K562 (cell line): ENCODE measurements at regions of chr7 and their contacts with region 1.

Region 1: GRCh38 chr7:94395141-94396036 is 694 bp downstream of the COL1A2 start:
- DNase-seq: peak; percentile 83 to 86 (median 84)
- ATAC-seq: peak; percentile 96
- H3K4me3 ChIP-seq: no peak overlapping the region
- H3K27ac ChIP-seq: peak overlapping the region; percentile 31; the same call in 2 of the 3 replicates
- H3K4me1 ChIP-seq: peaks cover 5 to 7% of the 10 kb centered on the region in 2 experiments; a peak in 4 of 5 replicates
- H3K27me3 ChIP-seq: peaks cover 0 to 10% of the 10 kb centered on the region in 2 experiments; a peak in 1 of 5 replicates
- CTCF ChIP-seq: peak; percentile 71 to 90 (median 83)
- EP300 ChIP-seq: no peak
- POLR2A ChIP-seq: no peak
- RAD21 ChIP-seq: peak; percentile 75 to 90

Region 2: DNA sequence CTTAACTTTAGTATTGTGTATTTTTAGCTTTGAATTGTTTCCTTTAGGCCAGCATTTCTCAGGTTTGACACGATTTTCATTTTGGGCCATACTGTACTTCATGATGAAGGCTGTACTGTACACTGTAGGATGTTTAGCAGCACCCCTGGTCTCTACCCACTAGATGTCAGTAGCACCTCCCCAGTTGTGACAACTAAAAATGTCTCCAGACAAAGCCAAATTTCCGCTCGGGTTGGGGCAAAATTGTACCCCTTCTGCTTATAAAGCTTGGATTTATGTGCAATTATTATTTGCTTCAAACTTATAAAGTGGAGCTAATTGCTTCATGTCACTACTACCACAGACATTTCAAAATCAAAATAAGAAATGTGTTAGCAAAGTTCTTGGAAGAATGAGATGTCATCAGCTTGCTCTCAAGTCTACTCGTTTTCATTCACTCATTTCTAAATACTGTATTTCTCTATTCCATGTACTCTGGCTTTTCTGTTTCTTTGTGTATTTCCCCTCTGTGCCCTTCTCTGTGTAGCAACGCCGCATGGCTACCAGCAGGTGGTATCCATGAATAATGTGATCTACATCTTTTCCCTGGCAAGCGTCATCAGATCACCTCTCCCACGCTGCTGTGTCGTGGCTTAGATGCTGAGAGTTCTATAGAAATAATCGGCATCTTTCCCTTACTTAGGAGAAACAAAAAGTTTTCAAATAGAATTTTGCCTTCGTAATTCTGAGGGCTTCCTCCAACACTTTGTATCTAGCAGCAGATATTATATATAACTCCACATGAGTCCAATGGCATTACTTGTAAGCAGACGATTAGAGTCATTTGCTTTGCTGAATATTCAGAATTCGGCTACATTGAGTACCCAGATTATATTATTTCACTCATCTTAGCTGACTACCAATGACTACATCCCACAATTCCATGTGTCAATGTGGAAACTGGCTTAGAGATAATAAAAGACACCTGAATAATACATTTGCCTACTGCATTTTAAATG is 773.1 kb before region 1 on chr7:
- CTCF ChIA-PET with region 1: no interaction called
- POLR2A ChIA-PET with region 1: no interaction called
- in situ Hi-C with region 1: no loop called
- intact Hi-C with region 1: loop called (anchors 10 kb)
- DNase-seq: peak; percentile 35 to 59 (median 52)
- ATAC-seq: peak; percentile 98
- H3K4me3 ChIP-seq: no peak overlapping the region
- H3K27ac ChIP-seq: no peak overlapping the region
- H3K4me1 ChIP-seq: 0 out of 5 replicates have a peak, but pooled peaks cover 0 to 3% of the 10 kb centered on the region in 2 experiments
- H3K27me3 ChIP-seq: no peaks in the 10 kb centered on the region
- CTCF ChIP-seq: peak; percentile 60 to 63 (median 61)
- EP300 ChIP-seq: no peak
- POLR2A ChIP-seq: no peak
- RAD21 ChIP-seq: peak; percentile 44 to 53

Region 3: GRCh38 chr7:93715234-93715633 is 680.2 kb before region 1 on chr7:
- CTCF ChIA-PET with region 1: interaction called, 7 read pairs
- POLR2A ChIA-PET with region 1: no interaction called
- in situ Hi-C with region 1: no loop called
- intact Hi-C with region 1: loop called (anchors 1 kb)
- DNase-seq: peak; percentile 32 to 73 (median 51)
- ATAC-seq: peak; percentile 95
- H3K4me3 ChIP-seq: no peak overlapping the region
- H3K27ac ChIP-seq: no peak overlapping the region
- H3K4me1 ChIP-seq: peaks cover 0 to 6% of the 10 kb centered on the region in 2 experiments; a peak in 2 of 5 replicates
- H3K27me3 ChIP-seq: no peaks in the 10 kb centered on the region
- CTCF ChIP-seq: peak; percentile 69 to 84 (median 75)
- EP300 ChIP-seq: no peak
- POLR2A ChIP-seq: no peak
- RAD21 ChIP-seq: peak; percentile 81 to 85

Region 4: GRCh38 chr7:93955304-93955703 is 440.1 kb before region 1 on chr7:
- CTCF ChIA-PET with region 1: no interaction called
- POLR2A ChIA-PET with region 1: no interaction called
- in situ Hi-C with region 1: no loop called
- intact Hi-C with region 1: no loop called
- DNase-seq: no peak
- ATAC-seq: no peak
- H3K4me3 ChIP-seq: no peak overlapping the region
- H3K27ac ChIP-seq: no peak overlapping the region
- H3K4me1 ChIP-seq: no peaks in the 10 kb centered on the region
- H3K27me3 ChIP-seq: no peaks in the 10 kb centered on the region
- CTCF ChIP-seq: no peak
- EP300 ChIP-seq: no peak
- POLR2A ChIP-seq: no peak
- RAD21 ChIP-seq: no peak

Region 5: GRCh38 chr7:94087664-94088352 is 307.6 kb before region 1 on chr7:
- CTCF ChIA-PET with region 1: no interaction called
- POLR2A ChIA-PET with region 1: no interaction called
- in situ Hi-C with region 1: no loop called
- intact Hi-C with region 1: loop called (anchors 10 kb)
- DNase-seq: peak; percentile 51 to 57 (median 55)
- ATAC-seq: peak; percentile 88
- H3K4me3 ChIP-seq: no peak overlapping the region
- H3K27ac ChIP-seq: no peak overlapping the region
- H3K4me1 ChIP-seq: no peaks in the 10 kb centered on the region
- H3K27me3 ChIP-seq: peaks cover 3 to 17% of the 10 kb centered on the region in 2 experiments
- CTCF ChIP-seq: peak; percentile 74 to 79 (median 77)
- EP300 ChIP-seq: no peak
- POLR2A ChIP-seq: no peak
- RAD21 ChIP-seq: peak; percentile 82 to 87

Region 6: DNA sequence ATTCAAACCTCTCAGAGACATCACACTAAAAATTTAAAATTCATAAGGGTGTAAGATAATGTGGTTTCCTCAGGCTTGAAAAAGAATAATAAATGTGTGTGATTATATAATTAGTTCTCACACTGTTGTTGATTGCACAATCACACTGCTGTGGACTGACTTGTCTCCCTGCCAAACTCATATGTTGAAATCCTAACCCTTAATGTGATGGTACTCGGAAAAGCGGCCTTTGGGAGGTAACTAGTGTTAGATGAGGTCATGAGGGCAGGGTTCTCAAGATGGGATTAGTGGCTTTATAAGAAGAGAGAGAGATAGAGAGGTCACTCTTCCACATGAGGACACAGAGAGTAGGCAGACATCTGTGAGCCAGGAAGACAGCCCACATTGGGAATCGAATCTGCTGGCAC is 129.1 kb before region 1 on chr7:
- CTCF ChIA-PET with region 1: no interaction called
- POLR2A ChIA-PET with region 1: no interaction called
- in situ Hi-C with region 1: no loop called
- intact Hi-C with region 1: no loop called
- DNase-seq: no peak
- ATAC-seq: no peak
- H3K4me3 ChIP-seq: no peak overlapping the region
- H3K27ac ChIP-seq: no peak overlapping the region
- H3K4me1 ChIP-seq: no peaks in the 10 kb centered on the region
- H3K27me3 ChIP-seq: no peaks in the 10 kb centered on the region
- CTCF ChIP-seq: no peak
- EP300 ChIP-seq: no peak
- POLR2A ChIP-seq: no peak
- RAD21 ChIP-seq: no peak

Region 7: DNA sequence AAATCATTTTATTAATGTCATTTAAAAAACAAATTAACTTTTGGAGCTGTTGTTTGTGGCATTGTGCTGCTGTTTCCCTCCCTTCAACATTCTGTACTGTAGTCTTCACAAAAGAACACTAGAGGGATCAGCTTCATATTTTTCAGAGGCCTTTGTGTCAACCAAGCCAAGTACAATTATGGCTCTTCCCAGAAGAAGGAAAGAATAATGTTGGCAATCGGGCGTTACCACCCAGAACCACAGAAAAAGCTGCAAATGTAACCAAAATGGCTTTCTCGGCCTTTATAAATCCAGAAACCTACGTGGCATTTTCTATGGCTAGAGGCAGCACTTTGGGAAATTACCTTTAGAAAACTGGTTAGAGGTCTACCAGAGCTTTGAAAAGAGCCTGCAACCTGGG is 99.5 kb before region 1 on chr7:
- CTCF ChIA-PET with region 1: no interaction called
- POLR2A ChIA-PET with region 1: no interaction called
- in situ Hi-C with region 1: no loop called
- intact Hi-C with region 1: loop called (anchors 1 kb)
- DNase-seq: no peak
- ATAC-seq: peak; percentile 79
- H3K4me3 ChIP-seq: no peak overlapping the region
- H3K27ac ChIP-seq: no peak overlapping the region
- H3K4me1 ChIP-seq: no peaks in the 10 kb centered on the region
- H3K27me3 ChIP-seq: no peaks in the 10 kb centered on the region
- CTCF ChIP-seq: peak in 2 of 3 experiments; percentile 12 to 29; a peak in 2 of 6 replicates
- EP300 ChIP-seq: no peak
- POLR2A ChIP-seq: no peak
- RAD21 ChIP-seq: peak in 1 of 2 experiments; percentile 57; a peak in 2 of 4 replicates

Region 8: DNA sequence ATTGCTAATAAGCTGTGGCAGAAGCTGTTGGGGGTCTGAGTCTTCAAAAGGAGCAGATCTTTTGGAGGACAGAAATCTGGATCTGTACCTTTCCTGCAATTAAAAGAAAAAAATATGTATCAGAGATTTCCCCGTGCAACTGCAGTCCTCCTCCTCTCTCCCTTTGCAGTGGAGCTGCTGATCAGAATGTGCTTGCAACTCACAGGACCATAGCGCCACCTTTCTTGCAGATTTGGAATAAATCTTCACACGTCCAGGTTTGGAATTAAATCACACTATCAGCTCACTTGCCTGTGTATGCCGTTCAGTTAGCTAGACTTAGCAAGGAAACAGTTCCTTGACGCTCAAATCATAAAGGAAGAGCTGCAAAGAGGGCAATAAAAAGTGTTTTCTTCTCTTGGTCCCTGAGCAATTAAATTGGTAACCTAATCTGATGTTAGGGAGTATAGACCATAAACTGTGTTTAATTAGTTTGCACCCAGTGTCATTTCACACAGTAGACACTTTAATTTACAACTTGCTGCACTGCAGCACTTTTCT is 851.5 kb after region 1 on chr7:
- CTCF ChIA-PET with region 1: no interaction called
- POLR2A ChIA-PET with region 1: no interaction called
- in situ Hi-C with region 1: no loop called
- intact Hi-C with region 1: loop called (anchors 2 kb)
- DNase-seq: peak; percentile 26 to 71 (median 36)
- ATAC-seq: peak; percentile 89
- H3K4me3 ChIP-seq: no peak overlapping the region
- H3K27ac ChIP-seq: no peak overlapping the region
- H3K4me1 ChIP-seq: no peaks in the 10 kb centered on the region
- H3K27me3 ChIP-seq: no peaks in the 10 kb centered on the region
- CTCF ChIP-seq: peak; percentile 62 to 77 (median 68)
- EP300 ChIP-seq: no peak
- POLR2A ChIP-seq: no peak
- RAD21 ChIP-seq: peak; percentile 39 to 67; a peak in 2 of 4 replicates